Caco-2 (cell line): ENCODE measurements at regions of chr2 and their contacts with region 1.

Region 1: GRCh38 chr2:183359867-183360266 is 235.6 kb downstream of the NUP35 start:
- DNase-seq: no peak
- H3K4me3 ChIP-seq: no peak overlapping the region
- H3K4me3 Mint-ChIP-seq: no peak overlapping the region
- H3K27ac Mint-ChIP-seq: no peak overlapping the region
- H3K4me1 ChIP-seq: no peaks in the 10 kb centered on the region
- H3K4me1 Mint-ChIP-seq: no peaks in the 10 kb centered on the region
- H3K27me3 ChIP-seq: no peaks in the 10 kb centered on the region
- H3K27me3 Mint-ChIP-seq: no peaks in the 10 kb centered on the region
- CTCF ChIP-seq: no peak

Region 2: DNA sequence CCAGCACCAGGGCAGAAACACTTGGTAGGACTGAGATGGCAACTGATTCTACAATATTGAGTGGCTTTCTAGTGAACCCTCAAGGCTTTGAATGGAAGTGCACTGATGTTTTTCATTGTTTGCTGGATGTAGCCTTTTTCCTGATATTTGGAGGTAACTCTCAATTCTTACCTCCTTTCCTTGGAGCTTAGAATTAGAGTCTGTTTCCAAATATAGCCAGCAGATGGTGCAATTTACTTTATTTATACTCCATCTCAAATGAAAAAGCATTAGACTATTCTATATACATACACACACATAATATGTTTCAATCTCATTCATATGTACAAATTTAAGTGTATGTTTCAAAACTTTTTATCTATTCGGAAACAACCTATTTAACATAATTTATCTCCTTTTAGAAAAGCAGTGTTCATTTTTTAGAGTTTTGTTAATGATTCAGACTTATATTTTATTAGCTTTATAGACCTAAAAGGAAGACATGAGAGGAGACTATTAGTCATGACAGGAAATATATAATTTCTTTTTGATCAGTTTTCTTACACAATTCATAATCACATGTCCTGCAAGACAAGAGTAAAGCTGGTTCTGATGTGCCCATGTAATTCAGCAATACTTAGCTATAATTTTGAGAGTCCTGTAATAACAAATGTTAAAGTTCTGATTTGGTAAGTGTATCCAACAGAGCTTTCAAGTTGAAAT is 110.8 kb before region 1 on chr2:
- CTCF ChIA-PET with region 1: no interaction called
- POLR2A ChIA-PET with region 1: no interaction called
- intact Hi-C with region 1: loop called (anchors 5 kb)
- DNase-seq: peak in 1 of 2 experiments; percentile 19
- H3K4me3 ChIP-seq: no peak overlapping the region
- H3K4me3 Mint-ChIP-seq: no peak overlapping the region
- H3K27ac Mint-ChIP-seq: no peak overlapping the region
- H3K4me1 ChIP-seq: no peaks in the 10 kb centered on the region
- H3K4me1 Mint-ChIP-seq: no peaks in the 10 kb centered on the region
- H3K27me3 ChIP-seq: no peaks in the 10 kb centered on the region
- H3K27me3 Mint-ChIP-seq: no peaks in the 10 kb centered on the region
- CTCF ChIP-seq: no peak